PC-9 (cell line): ENCODE measurements at regions of chr11 and their contacts with region 1.

Region 1: GRCh38 chr11:127345819-127346459 is 345.4 kb upstream of the KIRREL3 start:
- DNase-seq: peak in 1 of 2 experiments; percentile 16
- H3K4me3 ChIP-seq: no peak overlapping the region
- H3K27ac ChIP-seq: no peak overlapping the region
- H3K4me1 ChIP-seq: no peaks in the 10 kb centered on the region
- H3K27me3 ChIP-seq: 0 out of 2 replicates have a peak, but pooled peaks cover 5% of the 10 kb centered on the region
- CTCF ChIP-seq: peak; percentile 76

Region 2: DNA sequence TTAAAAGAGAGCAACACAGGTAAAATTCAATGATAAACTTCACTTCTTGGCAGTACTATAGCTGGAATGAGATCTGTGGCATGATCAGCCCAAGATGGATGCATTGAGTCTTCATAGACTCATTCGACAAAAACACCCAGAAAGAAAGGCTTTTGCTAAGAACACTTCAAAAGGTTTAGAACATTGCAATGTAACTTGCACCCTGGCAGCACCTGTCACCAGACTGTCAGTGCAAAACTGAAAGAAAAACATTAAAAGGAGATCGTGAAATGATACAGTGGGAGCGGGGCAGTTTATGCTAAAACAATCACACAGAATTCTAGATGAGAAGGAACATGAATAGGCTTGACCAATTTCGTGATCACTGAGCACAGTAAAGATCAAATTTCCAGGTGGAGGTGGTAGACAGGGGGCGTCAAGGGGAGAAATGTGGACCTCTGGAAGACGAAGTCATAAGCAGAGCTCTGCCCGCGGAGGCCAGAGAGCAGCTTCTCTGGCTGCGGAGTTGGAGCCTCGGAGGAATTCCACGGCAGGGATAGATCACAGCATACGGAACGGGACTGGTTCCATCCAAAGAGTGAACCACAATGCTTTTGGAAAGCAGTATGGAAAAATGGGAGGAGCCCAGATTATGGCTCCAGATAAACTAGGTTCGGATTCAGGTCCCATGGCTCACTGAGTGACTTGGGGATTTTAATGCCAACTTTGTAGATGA is 1388.2 kb before region 1 on chr11:
- CTCF ChIA-PET with region 1: no interaction called
- POLR2A ChIA-PET with region 1: interaction called, 15 read pairs
- intact Hi-C with region 1: no loop called
- DNase-seq: no peak
- H3K4me3 ChIP-seq: no peak overlapping the region
- H3K27ac ChIP-seq: no peak overlapping the region
- H3K4me1 ChIP-seq: no peaks in the 10 kb centered on the region
- H3K27me3 ChIP-seq: no peaks in the 10 kb centered on the region
- CTCF ChIP-seq: no peak